HEK293 (cell line): ENCODE measurements at regions of chr19 and their contacts with region 1.

Region 1: GRCh38 chr19:42295831-42296525 is 6.0 kb upstream of the PRR19 start:
- H3K4me3 ChIP-seq: no peak overlapping the region
- H3K27ac ChIP-seq: no peak overlapping the region
- H3K4me1 ChIP-seq: no peaks in the 10 kb centered on the region
- CTCF ChIP-seq: peak; percentile 95

Region 2: GRCh38 chr19:42254989-42255765 is 40.8 kb before region 1 on chr19 and contains the start of gene ERF:
- CTCF ChIA-PET with region 1: interaction called, 14 read pairs
- POLR2A ChIA-PET with region 1: interaction called, 3 read pairs
- H3K4me3 ChIP-seq: peak within 1 kb of the TSS; percentile 83
- H3K27ac ChIP-seq: peak within 1 kb of the TSS; percentile 99
- H3K4me1 ChIP-seq: peaks cover 34% of the 10 kb centered on the region
- CTCF ChIP-seq: no peak

Region 3: DNA sequence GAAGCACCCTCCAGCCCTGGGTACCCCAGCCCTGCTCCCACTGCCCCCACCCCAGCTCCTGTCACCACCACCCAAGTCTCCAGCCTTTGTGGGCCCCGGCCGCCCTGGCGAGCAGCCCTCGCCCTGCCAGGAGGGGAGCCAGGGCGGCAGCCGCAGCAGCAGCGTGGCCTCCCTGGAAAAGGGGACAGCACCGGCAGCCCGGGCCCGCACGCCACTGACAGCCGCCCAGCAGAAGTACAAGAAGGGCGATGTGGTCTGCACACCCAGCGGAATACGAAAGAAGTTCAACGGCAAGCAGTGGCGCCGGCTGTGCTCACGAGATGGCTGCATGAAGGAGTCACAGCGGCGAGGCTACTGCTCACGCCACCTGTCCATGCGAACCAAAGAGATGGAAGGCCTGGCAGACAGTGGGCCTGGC is 23.0 kb before region 1 on chr19:
- CTCF ChIA-PET with region 1: no interaction called
- POLR2A ChIA-PET with region 1: no interaction called
- H3K4me3 ChIP-seq: no peak overlapping the region
- H3K27ac ChIP-seq: no peak overlapping the region
- H3K4me1 ChIP-seq: peaks cover 19% of the 10 kb centered on the region
- CTCF ChIP-seq: no peak

Region 4: GRCh38 chr19:42311657-42312056 is 15.7 kb after region 1 on chr19:
- CTCF ChIA-PET with region 1: interaction called, 10 read pairs
- POLR2A ChIA-PET with region 1: no interaction called
- H3K4me3 ChIP-seq: no peak overlapping the region
- H3K27ac ChIP-seq: no peak overlapping the region
- H3K4me1 ChIP-seq: no peaks in the 10 kb centered on the region; the same call in 1 of the 2 replicates
- CTCF ChIP-seq: peak; percentile 24; the same call in 1 of the 2 replicates